ENCODE measurements at regions of chr10 and their contacts with region 1.

Region 1: DNA sequence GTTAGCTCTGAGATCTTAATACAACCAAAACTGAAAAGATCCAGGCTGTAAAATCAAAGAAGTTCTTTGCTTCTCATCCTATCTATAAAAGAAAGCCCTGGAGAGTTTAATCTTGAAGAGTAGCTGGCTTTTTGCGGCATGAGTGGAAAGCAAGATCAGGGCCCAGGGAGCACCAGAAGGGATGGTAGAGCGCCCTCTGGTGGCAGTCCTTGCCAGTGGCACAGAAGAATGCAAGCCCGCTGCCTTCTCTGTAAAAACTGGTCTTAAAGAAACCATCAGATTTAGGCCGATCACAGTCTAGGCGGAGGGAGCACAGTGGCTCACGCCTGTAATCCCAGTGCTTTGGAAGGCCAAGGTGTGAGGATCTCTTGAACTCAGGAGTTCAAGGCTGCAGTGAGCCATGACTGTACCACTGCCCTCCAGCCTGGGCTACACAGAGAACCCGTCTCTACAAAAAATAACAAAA is 35.6 kb downstream of the CPN1 start:
- DNase-seq: peak; percentile 87
- H3K4me3 Mint-ChIP-seq: no peak overlapping the region
- H3K27ac Mint-ChIP-seq: no peak overlapping the region
- H3K4me1 Mint-ChIP-seq: peaks cover 3% of the 10 kb centered on the region
- H3K27me3 Mint-ChIP-seq: no peaks in the 10 kb centered on the region

Region 2: GRCh38 chr10:99854860-99855259 is 191.2 kb before region 1 on chr10:
- CTCF ChIA-PET with region 1: interaction called, 282 read pairs
- POLR2A ChIA-PET with region 1: no interaction called
- intact Hi-C with region 1: no loop called
- DNase-seq: no peak
- H3K4me3 Mint-ChIP-seq: no peak overlapping the region
- H3K27ac Mint-ChIP-seq: no peak overlapping the region
- H3K4me1 Mint-ChIP-seq: no peaks in the 10 kb centered on the region
- H3K27me3 Mint-ChIP-seq: peaks cover 5% of the 10 kb centered on the region

Region 3: GRCh38 chr10:99926925-99927720 is 118.9 kb before region 1 on chr10:
- CTCF ChIA-PET with region 1: no interaction called
- POLR2A ChIA-PET with region 1: no interaction called
- intact Hi-C with region 1: no loop called
- DNase-seq: no peak
- H3K4me3 Mint-ChIP-seq: no peak overlapping the region
- H3K27ac Mint-ChIP-seq: no peak overlapping the region
- H3K4me1 Mint-ChIP-seq: peaks cover 10% of the 10 kb centered on the region
- H3K27me3 Mint-ChIP-seq: no peaks in the 10 kb centered on the region

Region 4: DNA sequence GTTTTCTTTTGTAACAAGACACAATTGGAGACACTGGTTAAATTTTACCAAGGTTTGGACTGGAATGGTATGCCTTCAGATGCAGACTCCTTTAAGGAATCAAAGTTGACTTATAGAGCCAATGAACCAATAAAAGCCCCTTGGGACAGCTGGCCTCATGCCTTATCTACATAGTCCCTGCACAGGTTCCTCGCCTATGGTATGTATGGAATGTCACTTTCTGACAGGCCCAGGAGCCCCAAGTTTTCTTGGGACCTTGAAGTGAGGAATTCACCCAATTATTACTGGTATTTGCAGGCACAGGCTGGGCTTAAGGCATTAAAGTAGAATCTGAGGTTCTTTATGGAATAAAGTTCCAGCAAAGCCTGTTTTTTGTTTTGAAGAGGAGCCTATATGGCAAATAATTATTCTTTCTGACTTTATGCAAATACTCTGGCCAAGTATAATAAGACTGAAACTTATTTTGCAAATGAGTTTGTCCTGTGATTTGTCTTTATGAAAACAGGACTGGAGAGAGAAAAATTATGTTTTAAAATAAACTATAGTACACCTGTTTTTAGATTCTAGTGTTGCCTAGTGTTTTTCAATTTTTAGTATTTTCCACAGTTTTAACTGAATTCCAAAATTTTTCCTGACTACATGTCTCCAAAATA is 12.2 kb before region 1 on chr10:
- CTCF ChIA-PET with region 1: interaction called, 13 read pairs
- POLR2A ChIA-PET with region 1: no interaction called
- intact Hi-C with region 1: no loop called
- DNase-seq: no peak
- H3K4me3 Mint-ChIP-seq: no peak overlapping the region
- H3K27ac Mint-ChIP-seq: no peak overlapping the region
- H3K4me1 Mint-ChIP-seq: no peaks in the 10 kb centered on the region
- H3K27me3 Mint-ChIP-seq: peaks cover 14% of the 10 kb centered on the region

Region 5: DNA sequence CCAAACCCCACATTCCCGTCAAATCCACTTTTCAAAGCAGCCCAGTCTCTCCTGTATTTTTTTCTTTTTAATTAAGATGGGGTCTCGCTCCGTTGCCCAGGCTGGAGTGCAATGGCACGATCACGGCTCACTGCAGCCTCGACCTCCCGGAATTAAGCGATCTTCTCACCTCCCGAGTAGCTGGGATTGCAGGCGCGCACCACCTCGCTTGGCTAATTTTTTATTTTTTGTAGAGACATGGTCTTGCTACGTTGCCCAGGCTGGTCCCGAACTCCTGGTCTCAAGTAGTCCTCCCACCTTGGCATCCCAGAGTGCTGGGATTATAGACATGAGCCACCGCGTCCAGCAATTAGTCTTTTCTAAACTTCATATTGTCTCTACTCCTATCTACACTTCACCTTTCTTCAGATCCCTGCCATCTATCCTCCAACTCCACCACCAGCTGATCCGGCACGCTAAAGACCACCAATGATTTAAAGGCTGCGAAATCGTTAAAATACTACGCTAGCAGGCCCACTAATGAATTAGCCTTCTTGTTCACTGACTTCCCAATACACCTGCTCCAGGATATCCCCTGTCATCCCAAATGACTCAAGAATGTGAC is 183.9 kb after region 1 on chr10:
- CTCF ChIA-PET with region 1: no interaction called
- POLR2A ChIA-PET with region 1: no interaction called
- intact Hi-C with region 1: no loop called
- DNase-seq: no peak
- H3K4me3 Mint-ChIP-seq: peak overlapping the region; percentile 88
- H3K27ac Mint-ChIP-seq: peak overlapping the region; percentile 81
- H3K4me1 Mint-ChIP-seq: peaks cover 25% of the 10 kb centered on the region
- H3K27me3 Mint-ChIP-seq: no peaks in the 10 kb centered on the region

Region 6: GRCh38 chr10:100687143-100688003 is 641.3 kb after region 1 on chr10:
- CTCF ChIA-PET with region 1: no interaction called
- POLR2A ChIA-PET with region 1: no interaction called
- intact Hi-C with region 1: no loop called
- DNase-seq: no peak
- H3K4me3 Mint-ChIP-seq: no peak overlapping the region
- H3K27ac Mint-ChIP-seq: no peak overlapping the region
- H3K4me1 Mint-ChIP-seq: no peaks in the 10 kb centered on the region
- H3K27me3 Mint-ChIP-seq: peaks cover 69% of the 10 kb centered on the region

Measured in activated CD4-positive, alpha-beta memory T cell treated with anti-CD3 and anti-CD28 coated beads for 36 hours (primary cell).